ENCODE measurements at regions of chr10 and their contacts with region 1.

Region 1: GRCh38 chr10:12448729-12449391 is 99.5 kb downstream of the CAMK1D start:
- DNase-seq: no peak
- ATAC-seq: peak; percentile 97
- H3K4me3 Mint-ChIP-seq: peak overlapping the region; percentile 67
- H3K27ac Mint-ChIP-seq: peak overlapping the region; percentile 77
- H3K4me1 Mint-ChIP-seq: peaks cover 66% of the 10 kb centered on the region
- H3K27me3 Mint-ChIP-seq: no peaks in the 10 kb centered on the region
- CTCF ChIP-seq: no peak

Region 2: DNA sequence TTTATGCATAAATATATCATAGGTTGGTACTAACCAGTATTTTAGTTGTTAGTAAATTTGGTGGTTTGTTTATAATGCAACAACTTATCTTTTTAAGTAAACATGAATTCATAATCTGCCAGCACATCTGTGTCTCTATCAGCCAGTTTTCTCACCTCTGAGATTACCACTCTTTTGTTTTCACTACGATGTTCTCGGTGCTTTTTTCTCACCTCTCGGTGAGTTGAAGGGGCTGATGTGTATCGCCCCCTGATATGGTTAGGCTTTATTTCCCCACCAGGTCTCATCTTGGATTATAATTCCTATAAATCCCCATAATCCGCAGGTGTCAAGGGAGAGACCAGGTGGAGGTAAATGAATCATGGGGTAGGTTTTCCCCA is 14.6 kb after region 1 on chr10:
- CTCF ChIA-PET with region 1: interaction called, 3 read pairs
- POLR2A ChIA-PET with region 1: no interaction called
- intact Hi-C with region 1: loop called (anchors 2 kb)
- DNase-seq: no peak
- ATAC-seq: no peak
- H3K4me3 Mint-ChIP-seq: no peak overlapping the region
- H3K27ac Mint-ChIP-seq: no peak overlapping the region
- H3K4me1 Mint-ChIP-seq: peaks cover 60% of the 10 kb centered on the region
- H3K27me3 Mint-ChIP-seq: no peaks in the 10 kb centered on the region
- CTCF ChIP-seq: no peak

Region 3: DNA sequence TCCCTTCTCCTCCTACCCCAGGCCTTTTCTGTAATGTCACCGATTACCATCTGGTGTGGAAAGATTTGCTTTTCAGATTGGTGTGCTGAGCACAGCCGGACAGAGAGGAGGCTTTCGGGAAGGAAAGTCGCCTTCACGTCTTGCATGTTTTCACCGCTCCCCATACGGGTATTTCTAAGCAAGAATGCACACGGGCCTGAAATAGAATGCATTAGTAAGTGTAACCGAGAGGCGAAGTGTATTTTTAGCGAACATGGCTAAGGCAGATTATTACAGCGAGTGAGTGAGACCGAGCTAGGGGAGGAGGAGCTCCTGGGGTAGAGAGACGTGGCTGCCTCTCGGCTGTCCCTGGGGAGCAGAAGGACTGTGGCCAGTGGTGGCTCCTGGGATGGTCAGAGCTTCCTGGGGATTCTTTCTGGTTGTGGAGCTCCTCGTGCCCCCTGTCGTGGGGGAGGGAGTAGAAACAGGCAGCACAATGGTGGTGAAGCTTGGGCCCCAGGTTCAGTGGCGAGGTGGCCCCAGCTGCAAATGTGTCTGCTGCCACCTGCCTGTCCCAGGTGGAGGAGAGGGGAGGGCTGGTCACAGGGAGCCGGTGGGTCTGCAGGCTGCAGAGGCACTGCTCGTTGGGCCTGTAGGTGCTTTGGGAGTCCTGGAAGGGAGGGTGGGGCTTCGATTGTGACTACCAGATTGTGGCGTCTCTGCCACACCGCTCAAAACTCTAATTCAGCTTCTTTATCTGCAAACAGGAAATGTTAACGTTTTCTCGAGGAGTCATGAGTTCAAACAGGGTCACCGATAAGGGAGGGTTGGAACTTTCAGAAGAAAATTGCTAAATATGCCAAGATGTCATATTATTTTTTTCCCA is 36.3 kb after region 1 on chr10:
- CTCF ChIA-PET with region 1: no interaction called
- POLR2A ChIA-PET with region 1: interaction called, 4 read pairs
- intact Hi-C with region 1: loop called (anchors 5 kb)
- DNase-seq: peak; percentile 29
- ATAC-seq: peak; percentile 73
- H3K4me3 Mint-ChIP-seq: peak overlapping the region; percentile 71
- H3K27ac Mint-ChIP-seq: peak overlapping the region; percentile 78
- H3K4me1 Mint-ChIP-seq: peaks cover 63% of the 10 kb centered on the region
- H3K27me3 Mint-ChIP-seq: no peaks in the 10 kb centered on the region
- CTCF ChIP-seq: no peak

Measured in activated B cell treated with CpG ODN at 0.5 μM for 24 hours (primary cell).